ENCODE measurements at regions of chr20 and their contacts with region 1.

Region 1: GRCh38 chr20:10427060-10427692 is 6.8 kb downstream of the MKKS start:
- DNase-seq: no peak
- ATAC-seq: peak; percentile 37
- H3K4me3 ChIP-seq: no peak overlapping the region
- H3K27ac ChIP-seq: no peak overlapping the region
- H3K4me1 ChIP-seq: peaks cover 18% of the 10 kb centered on the region
- H3K27me3 ChIP-seq: no peaks in the 10 kb centered on the region
- CTCF ChIP-seq: peak; percentile 75 to 78 (median 75)
- EP300 ChIP-seq: no peak
- POLR2A ChIP-seq: no peak
- RAD21 ChIP-seq: peak; percentile 63

Region 2: GRCh38 chr20:10022625-10023024 is 404.6 kb before region 1 on chr20:
- CTCF ChIA-PET with region 1: no interaction called
- POLR2A ChIA-PET with region 1: no interaction called
- RAD21 ChIA-PET with region 1: no interaction called
- SMC1A ChIA-PET with region 1: no interaction called
- in situ Hi-C with region 1: no loop called
- intact Hi-C with region 1: no loop called
- DNase-seq: no peak
- ATAC-seq: no peak
- H3K4me3 ChIP-seq: no peak overlapping the region
- H3K27ac ChIP-seq: no peak overlapping the region
- H3K4me1 ChIP-seq: no peaks in the 10 kb centered on the region
- H3K27me3 ChIP-seq: no peaks in the 10 kb centered on the region
- CTCF ChIP-seq: no peak
- EP300 ChIP-seq: no peak
- POLR2A ChIP-seq: no peak
- RAD21 ChIP-seq: no peak

Region 3: DNA sequence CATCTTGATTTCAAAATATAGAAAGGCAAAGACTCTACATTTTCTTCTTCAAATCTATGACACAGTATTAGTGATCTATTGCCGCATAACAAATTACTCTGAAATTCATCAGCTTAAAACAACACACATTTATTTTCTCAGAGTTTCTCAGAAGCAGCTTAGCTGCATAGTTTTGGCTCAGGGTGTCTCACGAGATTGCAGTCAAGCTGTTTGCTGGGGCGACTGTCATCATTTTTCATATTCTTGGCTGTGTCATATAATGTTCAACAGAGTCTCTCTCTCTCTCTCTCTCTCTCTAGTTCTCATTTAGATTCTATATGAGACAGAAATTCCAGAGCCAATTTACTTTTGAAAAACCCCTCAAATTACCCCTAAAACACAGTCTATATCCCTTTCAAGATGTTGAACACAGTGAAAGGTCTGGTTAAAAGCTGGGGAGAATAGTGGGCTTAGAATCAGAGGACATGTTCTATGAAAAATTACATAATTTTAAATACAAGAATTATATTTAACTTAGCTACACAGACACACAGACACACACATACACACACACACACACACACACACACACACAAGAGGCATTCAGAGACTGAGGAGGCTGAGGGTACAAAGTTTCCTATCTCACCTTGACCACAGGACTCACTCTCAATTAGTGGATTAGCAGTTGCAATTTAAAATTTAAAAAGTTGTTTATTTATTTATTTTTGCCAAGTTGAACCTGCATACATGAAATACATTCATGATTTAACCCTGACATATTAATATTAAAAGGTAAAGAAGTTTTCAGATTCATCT is 79.9 kb before region 1 on chr20:
- CTCF ChIA-PET with region 1: interaction called, 10 read pairs
- POLR2A ChIA-PET with region 1: interaction called, 5 read pairs
- RAD21 ChIA-PET with region 1: interaction called, 9 read pairs
- SMC1A ChIA-PET with region 1: interaction called, 60 read pairs
- in situ Hi-C with region 1: no loop called
- intact Hi-C with region 1: loop called (anchors 5 kb)
- DNase-seq: no peak
- ATAC-seq: no peak
- H3K4me3 ChIP-seq: no peak overlapping the region
- H3K27ac ChIP-seq: no peak overlapping the region
- H3K4me1 ChIP-seq: peaks cover 12% of the 10 kb centered on the region
- H3K27me3 ChIP-seq: no peaks in the 10 kb centered on the region
- CTCF ChIP-seq: no peak
- EP300 ChIP-seq: no peak
- POLR2A ChIP-seq: no peak
- RAD21 ChIP-seq: no peak

Region 4: GRCh38 chr20:10366898-10367692 is 60.1 kb before region 1 on chr20:
- CTCF ChIA-PET with region 1: interaction called, 7 read pairs
- POLR2A ChIA-PET with region 1: interaction called, 5 read pairs
- RAD21 ChIA-PET with region 1: interaction called, 7 read pairs
- SMC1A ChIA-PET with region 1: interaction called, 10 read pairs
- in situ Hi-C with region 1: no loop called
- intact Hi-C with region 1: no loop called
- DNase-seq: no peak
- ATAC-seq: no peak
- H3K4me3 ChIP-seq: no peak overlapping the region
- H3K27ac ChIP-seq: no peak overlapping the region
- H3K4me1 ChIP-seq: no peaks in the 10 kb centered on the region
- H3K27me3 ChIP-seq: no peaks in the 10 kb centered on the region; a peak in 1 of 4 replicates
- CTCF ChIP-seq: no peak
- EP300 ChIP-seq: no peak
- POLR2A ChIP-seq: no peak
- RAD21 ChIP-seq: no peak

Region 5: DNA sequence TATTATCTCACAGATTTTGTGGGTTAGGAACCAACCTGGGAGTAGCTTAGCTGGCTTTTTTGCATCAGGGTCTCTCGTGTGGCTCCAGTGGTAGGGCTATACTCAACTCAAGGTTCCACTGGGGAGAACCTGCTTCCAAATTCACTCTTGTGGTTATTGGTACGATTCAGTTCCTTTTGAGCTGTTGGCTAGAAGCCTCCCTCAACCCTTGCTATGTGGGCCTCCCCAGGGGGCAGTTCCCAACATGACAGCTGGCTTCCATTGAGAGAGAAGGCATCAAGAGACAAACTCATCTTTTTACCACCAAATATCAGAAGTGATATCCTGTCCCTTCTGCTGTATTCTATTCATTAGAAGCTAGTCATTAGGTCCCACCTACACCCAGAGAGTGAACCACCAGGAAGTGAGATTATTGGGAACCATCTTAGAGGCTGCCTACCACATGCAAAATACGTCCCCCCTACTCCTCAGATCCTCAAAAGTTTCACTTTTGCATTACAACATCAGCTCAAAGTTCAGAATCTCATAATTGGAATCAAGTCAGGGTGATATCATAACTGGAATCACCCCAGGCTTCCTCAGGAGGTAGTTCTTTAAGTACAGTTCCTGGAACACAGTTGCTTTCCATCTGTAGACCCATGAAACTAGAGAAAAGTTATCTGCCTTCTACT is 24.1 kb before region 1 on chr20:
- CTCF ChIA-PET with region 1: interaction called, 31 read pairs
- POLR2A ChIA-PET with region 1: interaction called, 6 read pairs
- RAD21 ChIA-PET with region 1: interaction called, 3 read pairs
- SMC1A ChIA-PET with region 1: interaction called, 4 read pairs
- in situ Hi-C with region 1: no loop called
- intact Hi-C with region 1: no loop called
- DNase-seq: no peak
- ATAC-seq: peak; percentile 63
- H3K4me3 ChIP-seq: no peak overlapping the region
- H3K27ac ChIP-seq: peak overlapping the region; percentile 10; the same call in 1 of the 2 replicates
- H3K4me1 ChIP-seq: peaks cover 9% of the 10 kb centered on the region
- H3K27me3 ChIP-seq: no peaks in the 10 kb centered on the region
- CTCF ChIP-seq: no peak
- EP300 ChIP-seq: no peak
- POLR2A ChIP-seq: no peak
- RAD21 ChIP-seq: no peak

Region 6: DNA sequence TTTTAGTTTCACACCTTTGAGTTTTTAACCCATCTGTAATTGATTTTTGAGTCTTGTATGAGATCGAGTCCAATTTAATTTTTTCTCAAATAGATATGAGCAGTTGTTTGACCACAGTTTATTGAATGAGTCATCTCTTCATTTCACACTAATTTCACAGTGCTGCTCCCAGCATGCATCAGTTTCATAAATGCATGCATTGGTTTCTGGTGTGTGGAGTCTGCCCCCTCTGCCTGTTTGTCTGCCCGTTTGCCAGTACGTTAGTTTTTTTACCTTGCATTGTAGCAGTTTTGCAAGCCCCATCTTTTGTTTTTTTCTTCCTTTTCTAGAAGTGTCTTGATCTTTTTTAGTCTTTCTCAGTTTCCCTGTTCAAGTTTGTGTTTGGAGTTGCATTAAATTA is 19.9 kb after region 1 on chr20:
- CTCF ChIA-PET with region 1: interaction called, 13 read pairs
- POLR2A ChIA-PET with region 1: no interaction called
- RAD21 ChIA-PET with region 1: interaction called, 5 read pairs
- SMC1A ChIA-PET with region 1: interaction called, 12 read pairs
- in situ Hi-C with region 1: no loop called
- intact Hi-C with region 1: no loop called
- DNase-seq: peak; percentile 92
- ATAC-seq: peak; percentile 96
- H3K4me3 ChIP-seq: peak overlapping the region; percentile 46; the same call in 1 of the 2 replicates
- H3K27ac ChIP-seq: peak overlapping the region; percentile 57; the same call in 1 of the 2 replicates
- H3K4me1 ChIP-seq: peaks cover 18% of the 10 kb centered on the region
- H3K27me3 ChIP-seq: no peaks in the 10 kb centered on the region
- CTCF ChIP-seq: peak in 1 of 3 experiments; percentile 26; a peak in 1 of 6 replicates
- EP300 ChIP-seq: peak; percentile 75 to 91
- POLR2A ChIP-seq: no peak
- RAD21 ChIP-seq: peak; percentile 17; the same call in 1 of the 2 replicates

Region 7: DNA sequence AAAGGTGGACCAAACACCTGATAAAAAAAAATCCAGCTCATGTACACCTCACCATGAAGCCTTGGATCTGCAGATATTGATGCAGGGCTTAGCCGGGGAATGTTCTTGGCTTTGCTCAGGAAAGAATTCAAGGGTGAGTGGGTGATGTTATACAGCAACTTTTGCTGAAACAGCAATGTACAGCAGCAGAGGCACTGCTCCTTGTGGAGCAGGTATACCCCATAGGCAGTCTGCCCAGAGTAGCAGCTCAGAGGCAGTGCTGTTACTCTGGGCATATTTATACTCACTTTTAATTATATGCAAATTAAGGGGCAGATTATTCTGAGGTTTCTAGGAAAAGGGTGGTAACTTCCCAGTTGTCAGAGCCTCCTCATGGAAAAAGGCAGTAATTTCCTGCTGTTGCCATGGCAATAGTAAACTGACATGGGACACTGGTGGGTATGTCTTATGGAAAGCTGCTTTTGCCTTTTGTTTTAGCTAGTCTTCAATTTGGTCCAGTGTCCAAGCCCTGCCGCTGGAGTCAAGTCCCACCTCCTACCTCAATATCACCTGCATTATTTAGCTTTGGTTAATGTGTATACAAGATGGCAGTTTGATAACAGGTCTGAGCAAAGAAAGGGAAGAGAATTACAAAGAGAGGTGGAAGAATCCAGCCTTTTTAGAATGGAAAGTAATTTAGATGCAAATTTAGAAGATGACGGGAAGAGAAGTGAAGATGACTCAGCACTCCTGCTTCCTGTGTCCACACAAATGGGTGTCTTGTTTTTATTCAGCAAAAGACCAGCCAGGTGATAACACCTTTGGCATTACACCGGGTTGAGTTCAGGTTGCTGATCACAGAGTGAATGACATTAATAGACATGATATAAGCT is 356.8 kb after region 1 on chr20:
- CTCF ChIA-PET with region 1: no interaction called
- POLR2A ChIA-PET with region 1: no interaction called
- RAD21 ChIA-PET with region 1: no interaction called
- SMC1A ChIA-PET with region 1: no interaction called
- in situ Hi-C with region 1: no loop called
- intact Hi-C with region 1: no loop called
- DNase-seq: no peak
- ATAC-seq: no peak
- H3K4me3 ChIP-seq: no peak overlapping the region
- H3K27ac ChIP-seq: no peak overlapping the region
- H3K4me1 ChIP-seq: peaks cover 7% of the 10 kb centered on the region
- H3K27me3 ChIP-seq: no peaks in the 10 kb centered on the region
- CTCF ChIP-seq: no peak
- EP300 ChIP-seq: no peak
- POLR2A ChIP-seq: no peak
- RAD21 ChIP-seq: no peak